Ascending aorta (tissue), 2 donors: ENCODE measurements at regions of chr12 and their contacts with region 1.

Region 1: GRCh38 chr12:10212201-10213131 is at the start of gene GABARAPL1:
- DNase-seq: peak; percentile 97 to 99
- H3K4me3 ChIP-seq: peak within 1 kb of the TSS; percentile 90 to 93
- H3K27ac ChIP-seq: peak within 1 kb of the TSS; percentile 99 to 100
- H3K4me1 ChIP-seq: peaks cover 0 to 13% of the 10 kb centered on the region in 2 donors
- H3K27me3 ChIP-seq: no peaks in the 10 kb centered on the region
- CTCF ChIP-seq: no peak
- total RNA-seq, gene GABARAPL1: 239 TPM

Region 2: DNA sequence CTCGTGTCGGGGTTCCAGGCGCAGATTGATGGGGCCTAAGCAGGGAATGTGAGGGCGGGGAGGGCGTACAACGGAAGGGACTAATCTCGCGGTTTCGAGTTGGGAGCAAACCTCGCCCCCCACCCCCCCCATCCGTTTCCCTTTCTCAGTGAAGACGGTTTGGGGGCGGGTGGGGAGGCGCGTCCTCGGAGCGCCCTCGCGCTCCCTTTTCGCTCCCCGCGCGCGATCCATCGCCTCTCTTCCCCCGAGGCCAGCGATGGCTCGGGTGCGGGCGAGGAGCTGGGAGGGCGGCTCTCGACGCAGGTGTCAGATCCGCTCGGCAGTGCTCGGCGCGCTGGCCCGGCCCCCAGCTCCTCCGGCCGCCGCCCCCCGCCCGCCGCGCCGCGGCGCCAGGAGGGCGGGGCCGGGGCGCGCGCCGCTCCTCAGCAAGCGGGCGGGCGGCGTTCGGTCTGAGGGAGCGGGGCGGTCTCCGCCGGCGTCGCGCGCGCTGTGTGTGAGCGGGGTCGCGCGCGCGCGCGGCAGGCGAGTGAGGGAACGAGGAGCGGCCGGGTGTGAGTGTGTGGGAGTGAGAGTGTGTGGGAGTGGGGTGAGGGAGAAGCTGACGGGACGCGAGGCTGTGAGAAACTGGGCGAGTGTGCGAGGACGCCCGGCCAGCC is 1514.9 kb before region 1 on chr12 and contains the start of gene RIMKLB:
- intact Hi-C with region 1: loop called (anchors 10 kb)
- DNase-seq: peak; percentile 33 to 93
- H3K4me3 ChIP-seq: peak within 1 kb of the TSS; percentile 81 to 92
- H3K27ac ChIP-seq: peak within 1 kb of the TSS; percentile 97 to 99
- H3K4me1 ChIP-seq: peaks cover 2 to 20% of the 10 kb centered on the region in 2 donors
- H3K27me3 ChIP-seq: no peaks in the 10 kb centered on the region
- CTCF ChIP-seq: no peak
- total RNA-seq, gene RIMKLB: 26.0 TPM

Region 3: GRCh38 chr12:9118158-9118557 is 1094.3 kb before region 1 on chr12:
- intact Hi-C with region 1: loop called (anchors 10 kb)
- DNase-seq: peak; percentile 30 to 70
- H3K4me3 ChIP-seq: peak overlapping the region; percentile 34 to 69
- H3K27ac ChIP-seq: peak overlapping the region; percentile 80 to 85
- H3K4me1 ChIP-seq: peaks cover 3 to 32% of the 10 kb centered on the region in 2 donors
- H3K27me3 ChIP-seq: no peaks in the 10 kb centered on the region
- CTCF ChIP-seq: no peak

Region 4: GRCh38 chr12:9776778-9777177 is 435.7 kb before region 1 on chr12:
- intact Hi-C with region 1: no loop called
- DNase-seq: no peak
- H3K4me3 ChIP-seq: no peak overlapping the region
- H3K27ac ChIP-seq: no peak overlapping the region
- H3K4me1 ChIP-seq: no peaks in the 10 kb centered on the region
- H3K27me3 ChIP-seq: no peaks in the 10 kb centered on the region
- CTCF ChIP-seq: no peak

Region 5: DNA sequence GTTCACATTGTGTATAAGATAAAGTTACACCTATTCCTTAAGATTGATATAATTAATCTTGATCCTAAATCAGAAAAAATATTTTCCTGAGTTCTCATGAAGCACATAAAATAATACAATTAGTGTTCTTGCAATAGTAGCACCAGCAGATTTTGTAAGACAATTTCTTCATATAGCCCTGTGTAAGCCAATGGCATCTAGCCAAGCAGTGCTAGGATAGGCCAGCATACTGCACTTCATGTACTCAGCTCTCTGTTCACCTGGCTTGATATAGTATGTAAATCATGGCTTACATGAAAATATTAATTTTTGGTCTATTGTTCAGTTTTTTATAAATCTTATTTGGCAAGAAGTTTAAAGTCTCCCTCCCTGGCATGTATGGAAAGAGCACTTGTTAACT is 329.3 kb before region 1 on chr12:
- intact Hi-C with region 1: no loop called
- DNase-seq: no peak
- H3K4me3 ChIP-seq: no peak overlapping the region
- H3K27ac ChIP-seq: no peak overlapping the region
- H3K4me1 ChIP-seq: no peaks in the 10 kb centered on the region
- H3K27me3 ChIP-seq: no peaks in the 10 kb centered on the region
- CTCF ChIP-seq: no peak

Region 6: DNA sequence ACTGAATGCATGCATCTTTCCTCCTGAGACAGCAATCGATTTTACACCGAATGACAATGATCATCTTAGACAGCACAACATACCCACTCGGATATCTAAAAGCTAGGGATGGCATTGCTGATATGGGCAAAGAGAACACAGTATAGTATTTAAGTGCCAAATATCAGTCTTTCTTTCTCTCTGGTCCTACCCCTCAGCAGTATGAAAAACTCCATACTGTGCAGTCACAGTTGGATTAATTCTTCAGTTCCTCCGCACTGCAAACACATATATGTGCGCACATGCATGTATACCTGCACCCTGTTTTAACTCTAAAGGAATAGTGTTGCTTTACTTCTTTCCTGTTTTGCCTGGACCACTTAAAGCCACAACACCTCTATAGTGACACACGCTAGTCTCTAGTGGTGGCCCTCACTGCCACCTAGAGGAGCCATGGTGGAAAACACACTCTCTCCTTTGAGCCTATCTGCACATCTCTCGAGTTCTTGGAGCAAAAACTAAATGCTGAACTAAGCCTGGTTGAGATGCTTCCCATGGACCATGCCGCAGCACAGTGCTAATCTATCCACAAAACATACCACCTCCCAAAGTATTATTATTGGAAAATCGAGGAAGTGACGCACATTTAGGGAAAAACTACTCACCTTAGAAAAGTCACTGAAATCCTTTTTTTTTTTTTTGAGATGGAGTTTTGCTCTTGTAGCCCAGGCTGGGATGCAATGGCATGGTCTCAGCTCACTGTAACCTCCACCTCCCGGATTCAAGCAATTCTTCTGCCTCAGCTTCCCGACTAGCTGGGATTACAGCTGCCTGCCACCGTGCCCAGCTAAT is 21.7 kb before region 1 on chr12:
- intact Hi-C with region 1: no loop called
- DNase-seq: peak in 1 of 2 donors; percentile 78
- H3K4me3 ChIP-seq: no peak overlapping the region
- H3K27ac ChIP-seq: no peak overlapping the region
- H3K4me1 ChIP-seq: no peaks in the 10 kb centered on the region
- H3K27me3 ChIP-seq: no peaks in the 10 kb centered on the region
- CTCF ChIP-seq: peak; percentile 34 to 71 (median 64)

Region 7: DNA sequence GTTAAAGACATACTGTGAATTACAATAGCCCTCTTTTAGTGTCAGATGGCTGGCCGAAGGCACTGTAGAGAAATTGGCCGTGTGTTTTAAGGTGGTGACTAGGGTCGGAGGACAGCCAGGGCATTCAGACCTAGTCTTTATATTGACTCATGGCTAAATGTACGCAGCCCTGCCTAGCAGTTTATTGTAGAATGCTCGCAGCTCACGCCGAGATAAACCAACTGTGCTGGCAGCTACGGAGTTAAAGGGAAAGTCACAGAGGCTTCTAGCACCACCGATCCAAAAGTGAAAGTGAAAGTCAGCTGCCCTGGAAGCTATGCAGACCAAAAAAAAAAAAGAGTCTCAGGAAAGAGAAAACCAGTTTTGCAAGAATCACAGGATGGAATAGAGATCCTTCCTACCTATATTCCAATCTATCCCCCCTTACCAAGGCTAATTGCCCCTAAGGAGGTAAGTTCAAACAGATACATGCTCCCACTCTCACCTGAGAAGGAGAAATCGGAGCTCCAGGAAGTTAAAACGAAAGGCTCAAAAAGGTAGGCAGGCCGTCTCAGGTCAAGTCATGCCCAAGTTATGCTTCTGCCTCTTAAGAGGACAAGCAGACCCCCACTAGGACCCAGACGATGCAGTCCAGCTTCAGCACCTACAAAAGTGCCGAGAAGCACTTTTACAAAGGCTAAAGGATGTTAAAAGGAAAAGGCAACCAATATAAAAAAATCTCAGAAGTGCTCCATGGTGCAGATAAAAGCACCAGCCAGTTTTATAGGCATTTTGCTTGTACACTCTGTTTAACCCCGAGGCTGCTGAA is 152.6 kb after region 1 on chr12:
- intact Hi-C with region 1: loop called (anchors 5 kb)
- DNase-seq: peak in 1 of 2 donors; percentile 73
- H3K4me3 ChIP-seq: peak overlapping the region; percentile 77 to 87
- H3K27ac ChIP-seq: peak overlapping the region; percentile 88 to 90
- H3K4me1 ChIP-seq: peaks cover 10% of the 10 kb centered on the region in 2 donors
- H3K27me3 ChIP-seq: no peaks in the 10 kb centered on the region
- CTCF ChIP-seq: no peak

Region 8: GRCh38 chr12:10613349-10614055 is 401.0 kb after region 1 on chr12 and contains the start of gene MAGOHB:
- intact Hi-C with region 1: loop called (anchors 2 kb)
- DNase-seq: peak; percentile 82 to 98
- H3K4me3 ChIP-seq: peak within 1 kb of the TSS; percentile 86 to 99
- H3K27ac ChIP-seq: peak within 1 kb of the TSS; percentile 87 to 94
- H3K4me1 ChIP-seq: peaks cover 0 to 6% of the 10 kb centered on the region in 2 donors
- H3K27me3 ChIP-seq: no peaks in the 10 kb centered on the region
- CTCF ChIP-seq: no peak
- total RNA-seq, gene MAGOHB: 5.4 TPM

Region 9: DNA sequence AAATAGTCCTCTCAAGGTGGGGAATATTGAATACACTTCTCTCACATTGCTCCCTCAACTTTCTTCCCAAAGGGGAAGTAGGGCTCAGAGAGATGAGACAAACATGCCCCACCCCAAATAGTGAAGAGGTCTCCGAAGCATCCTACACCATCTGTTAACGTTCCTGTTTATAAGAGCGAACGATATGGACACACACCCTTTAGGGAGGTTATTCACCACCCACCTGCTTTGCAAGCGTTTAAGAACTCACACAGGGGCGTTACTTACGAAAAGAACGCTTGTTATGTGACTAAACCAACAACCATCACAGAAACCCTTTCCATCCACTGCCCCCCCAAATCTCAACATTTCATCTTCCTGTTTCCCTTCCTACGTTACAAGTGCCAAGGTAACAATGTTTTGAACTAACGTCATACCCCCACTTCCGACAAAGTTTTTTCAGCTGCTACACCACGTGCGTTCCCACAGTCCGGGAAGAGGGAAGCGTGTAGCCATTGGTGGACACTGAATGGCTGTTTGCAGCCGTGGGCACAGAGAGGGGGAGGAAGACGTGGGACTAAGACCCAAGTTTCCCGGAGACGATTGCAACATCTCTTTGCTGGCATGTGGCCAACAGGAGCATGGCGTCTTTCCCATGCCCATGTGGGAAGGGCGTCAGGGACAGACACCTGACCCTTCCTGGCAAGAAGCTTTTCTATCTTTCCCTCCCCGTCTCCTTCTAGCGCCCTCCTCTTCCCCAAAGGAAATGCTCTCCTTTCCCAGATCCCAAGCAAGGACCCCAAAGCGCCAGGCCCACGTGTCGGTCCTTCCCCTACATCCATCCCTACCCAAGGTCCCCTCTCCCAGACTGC is 509.4 kb after region 1 on chr12:
- intact Hi-C with region 1: loop called (anchors 1 kb)
- DNase-seq: peak; percentile 92 to 98
- H3K4me3 ChIP-seq: peak overlapping the region; percentile 80 to 95
- H3K27ac ChIP-seq: peak overlapping the region; percentile 98
- H3K4me1 ChIP-seq: peaks cover 0 to 40% of the 10 kb centered on the region in 2 donors
- H3K27me3 ChIP-seq: no peaks in the 10 kb centered on the region
- CTCF ChIP-seq: no peak

Region 10: DNA sequence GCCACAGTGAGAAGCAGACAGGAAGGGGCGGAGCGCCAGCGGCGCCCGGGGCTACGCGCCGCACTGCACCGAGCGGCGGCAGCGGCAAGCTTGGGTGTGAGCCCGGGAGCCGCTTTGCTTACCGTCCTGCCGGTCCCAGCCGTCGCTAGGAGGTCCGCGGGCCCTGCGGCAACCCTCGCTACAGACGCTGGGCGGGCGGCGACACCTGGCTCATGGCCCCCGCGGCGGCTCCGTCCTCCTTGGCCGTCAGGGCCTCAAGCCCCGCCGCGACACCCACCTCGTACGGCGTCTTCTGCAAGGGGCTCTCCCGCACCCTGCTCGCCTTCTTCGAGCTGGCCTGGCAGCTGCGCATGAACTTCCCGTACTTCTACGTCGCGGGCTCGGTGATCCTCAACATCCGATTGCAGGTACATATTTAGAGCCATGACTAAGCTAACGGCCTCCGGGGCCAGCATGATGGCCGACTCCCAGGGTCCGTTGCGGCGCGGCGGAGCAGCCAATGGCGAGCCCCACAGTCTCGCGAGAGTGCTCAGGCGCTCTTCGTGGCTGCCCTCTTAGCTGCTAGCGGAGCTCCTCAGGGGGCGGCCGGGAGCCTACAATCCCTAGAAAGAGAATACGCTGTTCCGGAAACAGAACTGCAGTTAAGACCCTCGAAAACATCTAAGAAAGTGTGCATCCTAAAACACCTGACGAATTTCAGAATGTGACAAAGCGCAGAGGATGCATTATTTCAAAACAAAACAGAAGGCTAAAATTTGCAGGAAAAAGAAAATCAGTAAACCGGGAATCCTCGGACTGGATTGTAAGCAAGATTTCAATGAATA is 958.9 kb after region 1 on chr12 and contains the start of gene SMIM10L1:
- intact Hi-C with region 1: loop called (anchors 10 kb)
- DNase-seq: peak; percentile 66 to 97
- H3K4me3 ChIP-seq: peak within 1 kb of the TSS; percentile 58 to 90
- H3K27ac ChIP-seq: peak within 1 kb of the TSS; percentile 94 to 99
- H3K4me1 ChIP-seq: peaks cover 3 to 18% of the 10 kb centered on the region in 2 donors
- H3K27me3 ChIP-seq: no peaks in the 10 kb centered on the region
- CTCF ChIP-seq: no peak
- total RNA-seq, gene SMIM10L1: 8.0 TPM